Transverse colon (tissue), 4 donors: ENCODE measurements at regions of chr5 and their contacts with region 1.

Region 1: DNA sequence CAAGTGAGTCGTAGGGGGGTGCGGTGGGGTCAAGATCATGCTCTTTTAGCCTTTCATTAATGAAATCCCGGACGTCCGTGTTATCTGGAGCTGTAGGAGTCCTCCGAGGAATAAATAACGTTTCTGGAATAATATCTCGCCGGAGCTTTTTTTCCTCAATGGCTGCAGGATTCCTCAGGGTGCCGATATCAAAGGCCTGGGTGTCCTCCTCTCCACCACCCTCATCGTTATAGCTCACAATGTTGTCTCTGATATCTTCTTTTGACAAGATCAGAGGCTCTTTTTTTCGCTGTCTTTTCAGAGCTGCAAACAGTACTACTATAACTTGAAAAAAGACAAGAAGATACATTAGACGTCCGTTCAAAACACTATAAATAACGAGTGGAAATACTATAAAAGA is 156.9 kb downstream of the CDH10 start:
- DNase-seq: no peak
- H3K4me3 ChIP-seq: no peak overlapping the region
- H3K27ac ChIP-seq: no peak overlapping the region
- H3K4me1 ChIP-seq: no peaks in the 10 kb centered on the region
- H3K27me3 ChIP-seq: no peaks in the 10 kb centered on the region
- CTCF ChIP-seq: no peak
- EP300 ChIP-seq: no peak
- POLR2A ChIP-seq: no peak

Region 2: DNA sequence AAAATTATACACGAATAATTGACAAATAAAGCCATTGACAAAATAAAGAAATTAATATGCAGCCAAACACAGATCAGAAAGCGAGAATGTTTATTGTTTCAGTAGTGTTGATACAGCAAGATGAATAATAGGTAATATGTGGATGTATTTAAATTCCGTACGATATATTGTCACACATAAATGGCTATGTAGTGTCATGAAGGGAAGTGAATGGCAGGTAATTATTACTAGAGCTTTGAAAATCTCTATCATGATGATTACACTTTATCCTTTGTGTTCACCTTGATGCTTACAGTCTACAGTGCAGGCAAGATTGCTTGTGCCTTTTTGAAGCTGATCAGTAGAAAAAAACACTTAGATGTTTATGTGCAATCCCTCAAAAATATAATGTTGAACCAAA is 180.2 kb after region 1 on chr5:
- in situ Hi-C with region 1: no loop called
- intact Hi-C with region 1: no loop called
- DNase-seq: no peak
- H3K4me3 ChIP-seq: no peak overlapping the region
- H3K27ac ChIP-seq: no peak overlapping the region
- H3K4me1 ChIP-seq: no peaks in the 10 kb centered on the region
- H3K27me3 ChIP-seq: no peaks in the 10 kb centered on the region
- CTCF ChIP-seq: no peak
- EP300 ChIP-seq: no peak
- POLR2A ChIP-seq: no peak

Region 3: GRCh38 chr5:24855485-24855884 is 367.7 kb after region 1 on chr5:
- in situ Hi-C with region 1: no loop called
- intact Hi-C with region 1: loop called (anchors 10 kb)
- DNase-seq: no peak
- H3K4me3 ChIP-seq: no peak overlapping the region
- H3K27ac ChIP-seq: no peak overlapping the region
- H3K4me1 ChIP-seq: no peaks in the 10 kb centered on the region
- H3K27me3 ChIP-seq: no peaks in the 10 kb centered on the region
- CTCF ChIP-seq: no peak
- EP300 ChIP-seq: no peak
- POLR2A ChIP-seq: no peak